K562 (cell line): ENCODE measurements at regions of chr2 and their contacts with region 1.

Region 1: DNA sequence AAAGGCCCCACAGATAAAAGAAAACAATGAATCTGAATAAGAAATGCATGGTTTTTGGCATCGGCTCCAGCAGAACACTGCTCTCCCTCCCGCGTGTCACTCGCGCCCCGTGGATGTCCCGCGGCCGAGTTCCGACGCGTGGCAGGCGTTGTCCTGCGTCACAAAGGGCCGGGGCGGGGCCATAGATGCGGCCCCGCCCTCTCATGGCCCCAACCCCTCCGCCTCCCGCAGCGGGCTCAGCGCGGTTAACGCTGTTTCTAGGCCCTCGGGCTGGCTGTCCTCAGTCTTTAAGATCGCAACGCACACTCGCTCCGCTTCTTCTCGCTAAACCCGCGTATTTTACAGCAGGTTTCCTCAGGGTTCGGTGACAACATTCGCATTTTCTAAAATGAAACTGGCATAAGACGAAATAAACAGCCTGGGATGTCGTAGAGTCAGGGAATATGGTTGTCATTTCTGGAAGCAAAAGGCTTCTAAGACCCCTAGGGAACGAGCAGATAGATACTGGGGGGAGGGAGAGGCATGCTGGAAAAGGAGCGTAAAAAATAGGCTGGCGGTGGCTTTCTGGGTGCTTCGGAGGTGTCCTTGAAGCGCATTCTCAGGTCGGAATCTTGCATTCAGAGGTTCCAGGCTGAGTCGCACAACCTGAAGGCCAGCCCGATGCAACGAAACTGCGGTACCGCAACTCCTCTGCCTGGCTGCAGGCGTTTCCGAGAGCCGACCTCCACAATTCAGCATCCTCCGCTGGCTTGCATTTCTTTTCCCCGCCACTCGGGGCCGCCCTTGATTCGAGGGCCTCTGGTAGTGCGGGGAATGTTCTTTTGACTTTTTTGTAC is at the start of gene FKBP7:
- DNase-seq: peak; percentile 85 to 93 (median 90)
- ATAC-seq: peak; percentile 83
- H3K4me3 ChIP-seq: peak within 1 kb of the TSS; percentile 57
- H3K27ac ChIP-seq: peak within 1 kb of the TSS; percentile 72
- H3K4me1 ChIP-seq: peaks cover 20 to 29% of the 10 kb centered on the region in 2 experiments
- H3K27me3 ChIP-seq: no peaks in the 10 kb centered on the region
- CTCF ChIP-seq: peak; percentile 94 to 97 (median 96)
- EP300 ChIP-seq: peak; percentile 25; the same call in 1 of the 2 replicates
- POLR2A ChIP-seq: peak; percentile 85
- RAD21 ChIP-seq: peak; percentile 73 to 90
- polyA plus RNA-seq, gene FKBP7: 19.3 to 23.2 TPM

Region 2: DNA sequence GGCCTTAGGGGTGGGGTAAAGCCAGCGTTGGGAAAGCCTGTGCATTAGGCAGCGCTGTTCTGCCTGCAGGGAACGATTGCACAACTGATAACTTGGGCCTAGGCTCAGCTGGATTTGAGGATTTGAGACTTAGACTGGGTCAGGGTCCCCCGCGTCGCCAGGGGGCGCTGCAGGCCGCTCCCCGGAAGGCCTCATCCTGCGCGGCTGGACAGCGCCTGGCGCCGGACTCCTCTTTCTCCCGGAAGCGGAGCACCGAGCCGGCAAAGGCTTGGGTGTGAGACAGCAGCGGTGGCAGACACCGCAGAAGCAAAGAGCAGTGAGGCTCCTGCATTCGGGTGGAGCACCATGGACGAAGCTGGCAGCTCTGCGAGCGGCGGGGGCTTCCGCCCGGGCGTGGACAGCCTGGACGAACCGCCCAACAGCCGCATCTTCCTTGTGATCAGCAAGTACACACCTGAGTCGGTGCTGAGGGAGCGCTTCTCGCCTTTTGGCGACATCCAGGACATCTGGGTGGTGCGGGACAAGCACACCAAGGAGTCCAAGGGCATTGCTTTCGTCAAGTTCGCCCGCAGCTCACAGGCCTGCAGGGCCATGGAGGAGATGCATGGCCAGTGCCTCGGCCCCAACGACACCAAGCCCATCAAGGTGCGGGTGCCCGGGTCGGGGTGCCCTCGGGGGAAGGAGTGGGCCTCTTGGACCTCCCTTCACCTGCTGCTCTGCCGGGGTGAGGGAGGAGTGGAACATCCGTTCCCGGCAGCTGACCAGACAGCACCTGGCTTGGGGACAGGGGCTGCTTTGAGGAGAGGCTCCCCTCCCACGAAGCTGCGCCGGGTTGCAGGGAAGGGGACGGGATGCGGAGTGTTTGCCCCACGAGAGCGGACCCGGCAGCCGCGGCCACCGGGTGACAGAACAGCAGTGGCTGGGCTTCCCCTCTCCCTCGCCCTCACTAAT is 366.2 kb before region 1 on chr2 and contains the start of gene RBM45:
- CTCF ChIA-PET with region 1: no interaction called
- POLR2A ChIA-PET with region 1: no interaction called
- in situ Hi-C with region 1: no loop called
- intact Hi-C with region 1: loop called (anchors 5 kb)
- DNase-seq: peak; percentile 95 to 96 (median 95)
- ATAC-seq: peak; percentile 97
- H3K4me3 ChIP-seq: peak within 1 kb of the TSS; percentile 66
- H3K27ac ChIP-seq: peak within 1 kb of the TSS; percentile 54; the same call in 2 of the 3 replicates
- H3K4me1 ChIP-seq: peaks cover 10 to 16% of the 10 kb centered on the region in 2 experiments; a peak in 3 of 5 replicates
- H3K27me3 ChIP-seq: no peaks in the 10 kb centered on the region; a peak in 1 of 5 replicates
- CTCF ChIP-seq: peak; percentile 97 to 99 (median 98)
- EP300 ChIP-seq: peak; percentile 61
- POLR2A ChIP-seq: peak; percentile 93
- RAD21 ChIP-seq: peak; percentile 79 to 86
- polyA plus RNA-seq, gene RBM45: 6.7 to 9.9 TPM

Region 3: GRCh38 chr2:178450774-178451525 is 27.7 kb before region 1 on chr2 and contains the starts of genes PJVK and PRKRA:
- CTCF ChIA-PET with region 1: no interaction called
- POLR2A ChIA-PET with region 1: interaction called, 5 read pairs
- in situ Hi-C with region 1: no loop called
- intact Hi-C with region 1: loop called (anchors 1 kb)
- DNase-seq: peak; percentile 98 to 99 (median 99)
- ATAC-seq: peak; percentile 97
- H3K4me3 ChIP-seq: peak within 1 kb of the TSS; percentile 90
- H3K27ac ChIP-seq: peak within 1 kb of the TSS; percentile 96
- H3K4me1 ChIP-seq: peaks cover 14 to 19% of the 10 kb centered on the region in 2 experiments; a peak in 4 of 5 replicates
- H3K27me3 ChIP-seq: no peaks in the 10 kb centered on the region
- CTCF ChIP-seq: peak in 2 of 3 experiments; percentile 9 to 14; a peak in 1 of 6 replicates
- EP300 ChIP-seq: peak; percentile 11; the same call in 1 of the 2 replicates
- POLR2A ChIP-seq: peak; percentile 99
- RAD21 ChIP-seq: no peak
- polyA plus RNA-seq, gene PJVK: 0.11 to 0.24 TPM
- polyA plus RNA-seq, gene PRKRA: 14.1 to 20.4 TPM

Region 4: GRCh38 chr2:178530625-178531142 is 52.0 kb after region 1 on chr2:
- CTCF ChIA-PET with region 1: no interaction called
- POLR2A ChIA-PET with region 1: no interaction called
- in situ Hi-C with region 1: no loop called
- intact Hi-C with region 1: no loop called
- DNase-seq: no peak
- ATAC-seq: peak; percentile 29; the same call in 2 of the 3 replicates
- H3K4me3 ChIP-seq: no peak overlapping the region
- H3K27ac ChIP-seq: no peak overlapping the region
- H3K4me1 ChIP-seq: no peaks in the 10 kb centered on the region
- H3K27me3 ChIP-seq: no peaks in the 10 kb centered on the region
- CTCF ChIP-seq: no peak
- EP300 ChIP-seq: no peak
- POLR2A ChIP-seq: no peak
- RAD21 ChIP-seq: no peak

Region 5: DNA sequence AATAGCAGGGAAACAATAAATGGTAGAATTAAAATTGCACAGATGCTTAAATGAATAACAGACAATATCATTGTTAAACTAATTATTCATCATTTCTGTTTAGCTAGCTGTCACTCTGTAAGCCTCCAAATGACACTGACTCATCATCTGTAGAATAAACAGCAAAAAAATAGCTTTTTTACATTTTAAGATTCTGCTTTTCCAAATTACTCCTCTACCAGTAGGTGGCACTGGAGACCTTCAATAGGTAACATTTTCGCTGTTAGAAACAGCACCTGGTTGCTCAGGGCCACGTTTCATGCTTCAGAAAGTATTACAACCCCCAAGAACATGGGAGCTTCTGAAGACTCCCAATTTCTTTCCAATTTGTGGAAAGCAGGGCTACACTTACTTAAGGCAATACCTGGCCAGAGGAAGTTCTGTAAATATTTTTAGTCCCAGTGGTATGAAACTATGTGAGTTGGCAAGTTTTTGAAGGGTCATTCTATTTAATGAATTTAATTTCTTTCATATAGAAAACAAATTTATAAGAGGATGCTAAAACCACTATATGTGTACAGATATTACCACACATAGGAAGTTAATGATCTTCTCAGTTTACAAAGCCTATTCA is 283.2 kb after region 1 on chr2:
- CTCF ChIA-PET with region 1: no interaction called
- POLR2A ChIA-PET with region 1: no interaction called
- in situ Hi-C with region 1: no loop called
- intact Hi-C with region 1: loop called (anchors 10 kb)
- DNase-seq: peak; percentile 35 to 73 (median 46)
- ATAC-seq: peak; percentile 87
- H3K4me3 ChIP-seq: no peak overlapping the region
- H3K27ac ChIP-seq: no peak overlapping the region
- H3K4me1 ChIP-seq: no peaks in the 10 kb centered on the region
- H3K27me3 ChIP-seq: no peaks in the 10 kb centered on the region; a peak in 1 of 5 replicates
- CTCF ChIP-seq: peak; percentile 72 to 95 (median 82)
- EP300 ChIP-seq: no peak
- POLR2A ChIP-seq: no peak
- RAD21 ChIP-seq: peak; percentile 84 to 90

Region 6: DNA sequence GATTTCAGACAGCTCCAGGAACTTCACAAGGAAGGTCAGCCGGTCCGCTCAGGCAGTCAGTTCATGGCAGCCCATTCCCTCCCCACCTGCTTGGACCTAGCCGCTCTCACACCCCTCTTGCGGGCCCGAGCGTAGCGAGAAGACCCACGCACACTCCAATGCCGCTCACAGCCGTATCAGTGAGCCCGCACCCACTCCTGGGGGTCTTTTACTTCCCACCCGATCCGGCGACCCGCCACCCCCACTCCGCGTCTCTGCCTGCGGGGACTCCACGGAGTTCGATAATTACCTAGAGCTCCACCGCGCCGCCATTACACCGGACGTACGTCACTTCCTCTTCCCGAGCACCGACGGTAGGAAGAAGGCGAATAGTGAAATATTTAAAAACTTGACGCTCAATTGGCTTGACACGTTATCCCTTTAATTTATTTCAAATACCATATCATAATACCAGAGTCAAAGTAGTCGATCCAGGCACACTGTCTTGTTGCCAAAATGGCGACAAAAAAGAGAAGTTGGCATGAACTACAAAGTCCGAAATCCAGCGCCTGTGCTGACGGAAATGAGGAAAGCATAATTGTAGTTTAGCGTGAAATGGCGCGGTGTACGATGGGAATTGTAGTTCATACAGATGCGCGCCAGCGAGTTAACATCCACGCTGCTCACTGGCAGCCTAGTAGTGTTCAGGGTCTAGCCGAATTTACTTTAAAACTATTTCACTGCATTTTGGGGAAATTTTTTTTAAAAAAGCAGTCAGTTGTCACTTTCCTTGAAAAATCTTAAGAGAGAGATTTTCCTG is 1528.3 kb after region 1 on chr2 and contains the start of gene CWC22:
- CTCF ChIA-PET with region 1: no interaction called
- POLR2A ChIA-PET with region 1: no interaction called
- in situ Hi-C with region 1: no loop called
- intact Hi-C with region 1: loop called (anchors 10 kb)
- DNase-seq: peak; percentile 76 to 96 (median 79)
- ATAC-seq: peak; percentile 93
- H3K4me3 ChIP-seq: peak within 1 kb of the TSS; percentile 65
- H3K27ac ChIP-seq: peak within 1 kb of the TSS; percentile 100
- H3K4me1 ChIP-seq: peaks cover 0 to 25% of the 10 kb centered on the region in 2 experiments; a peak in 4 of 5 replicates
- H3K27me3 ChIP-seq: no peaks in the 10 kb centered on the region
- CTCF ChIP-seq: peak in 1 of 3 experiments; percentile 11; a peak in 1 of 6 replicates
- EP300 ChIP-seq: peak; percentile 21; the same call in 1 of the 2 replicates
- POLR2A ChIP-seq: peak; percentile 95
- RAD21 ChIP-seq: 0 out of 4 replicates have a peak, but pooled peaks of 1 of the 2 experiments have one; percentile 14
- polyA plus RNA-seq, gene CWC22: 40.6 to 53.9 TPM